ENCODE measurements at regions of chr17 and their contacts with region 1.

Region 1: DNA sequence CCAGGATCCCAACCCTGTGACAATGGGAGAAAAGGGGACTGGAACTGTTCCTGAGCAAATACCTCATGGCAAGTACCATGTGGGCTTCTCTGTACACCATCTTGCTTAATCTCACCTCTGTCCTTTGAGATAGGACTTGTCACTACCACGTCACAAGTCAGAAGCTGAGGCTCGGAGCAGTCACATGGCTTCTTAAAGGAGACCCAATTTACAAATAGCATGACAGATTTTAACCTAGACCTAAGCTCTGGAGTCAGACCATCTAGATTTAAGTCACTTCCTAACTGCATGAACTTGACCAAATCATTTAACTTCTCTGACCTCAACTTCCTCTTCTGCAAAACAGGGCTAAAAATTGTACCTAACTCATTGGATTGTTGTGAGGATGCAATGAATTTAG is 36.0 kb upstream of the CCL1 start:
- DNase-seq: no peak
- H3K4me3 ChIP-seq: no peak overlapping the region
- H3K27ac ChIP-seq: no peak overlapping the region
- H3K4me1 ChIP-seq: peaks cover 0 to 4% (median 0%) of the 10 kb centered on the region in 4 experiments; a peak in 2 of 7 replicates
- H3K27me3 ChIP-seq: no peaks in the 10 kb centered on the region; a peak in 2 of 7 replicates
- CTCF ChIP-seq: no peak
- EP300 ChIP-seq: no peak
- POLR2A ChIP-seq: no peak
- RAD21 ChIP-seq: no peak

Region 2: DNA sequence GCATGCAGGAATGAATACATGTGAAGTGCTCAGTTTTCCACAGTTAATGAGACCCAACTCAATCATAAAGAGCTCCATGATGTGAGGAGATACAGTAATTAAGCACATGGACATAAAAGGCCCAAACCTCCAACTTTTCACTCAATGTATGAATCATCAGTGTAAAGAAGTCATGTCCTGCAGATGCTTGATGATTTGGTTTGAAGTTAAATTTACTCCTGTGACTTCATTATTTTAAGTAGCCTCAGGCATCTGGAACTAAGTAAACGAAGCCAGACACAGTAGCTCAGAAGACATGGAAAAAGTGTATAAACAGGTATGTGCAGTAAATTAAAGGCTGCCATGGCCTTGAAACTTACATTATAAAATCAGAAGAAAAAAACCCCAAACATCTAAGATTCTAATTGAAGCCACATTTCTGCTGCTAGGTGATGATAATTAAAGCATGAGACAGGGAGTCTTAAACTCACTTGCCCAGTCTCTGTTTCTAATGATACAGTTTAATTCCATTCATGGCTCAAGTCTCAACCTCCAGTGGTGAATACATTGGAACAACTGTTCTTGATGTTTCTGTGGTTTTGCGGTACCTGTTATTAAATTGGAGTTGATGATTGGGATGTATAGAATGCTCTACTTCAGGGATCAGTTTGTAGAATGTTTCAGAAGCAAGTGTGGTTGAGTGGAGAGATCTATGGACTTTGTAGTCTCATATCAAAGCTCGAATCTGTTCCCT is 172.8 kb before region 1 on chr17:
- CTCF ChIA-PET with region 1: no interaction called
- POLR2A ChIA-PET with region 1: no interaction called
- DNase-seq: no peak
- H3K4me3 ChIP-seq: no peak overlapping the region
- H3K27ac ChIP-seq: no peak overlapping the region
- H3K4me1 ChIP-seq: 0 out of 7 replicates have a peak, but pooled peaks cover 0 to 4% (median 0%) of the 10 kb centered on the region in 4 experiments
- H3K27me3 ChIP-seq: no peaks in the 10 kb centered on the region
- CTCF ChIP-seq: no peak
- EP300 ChIP-seq: no peak
- POLR2A ChIP-seq: no peak
- RAD21 ChIP-seq: no peak

Region 3: DNA sequence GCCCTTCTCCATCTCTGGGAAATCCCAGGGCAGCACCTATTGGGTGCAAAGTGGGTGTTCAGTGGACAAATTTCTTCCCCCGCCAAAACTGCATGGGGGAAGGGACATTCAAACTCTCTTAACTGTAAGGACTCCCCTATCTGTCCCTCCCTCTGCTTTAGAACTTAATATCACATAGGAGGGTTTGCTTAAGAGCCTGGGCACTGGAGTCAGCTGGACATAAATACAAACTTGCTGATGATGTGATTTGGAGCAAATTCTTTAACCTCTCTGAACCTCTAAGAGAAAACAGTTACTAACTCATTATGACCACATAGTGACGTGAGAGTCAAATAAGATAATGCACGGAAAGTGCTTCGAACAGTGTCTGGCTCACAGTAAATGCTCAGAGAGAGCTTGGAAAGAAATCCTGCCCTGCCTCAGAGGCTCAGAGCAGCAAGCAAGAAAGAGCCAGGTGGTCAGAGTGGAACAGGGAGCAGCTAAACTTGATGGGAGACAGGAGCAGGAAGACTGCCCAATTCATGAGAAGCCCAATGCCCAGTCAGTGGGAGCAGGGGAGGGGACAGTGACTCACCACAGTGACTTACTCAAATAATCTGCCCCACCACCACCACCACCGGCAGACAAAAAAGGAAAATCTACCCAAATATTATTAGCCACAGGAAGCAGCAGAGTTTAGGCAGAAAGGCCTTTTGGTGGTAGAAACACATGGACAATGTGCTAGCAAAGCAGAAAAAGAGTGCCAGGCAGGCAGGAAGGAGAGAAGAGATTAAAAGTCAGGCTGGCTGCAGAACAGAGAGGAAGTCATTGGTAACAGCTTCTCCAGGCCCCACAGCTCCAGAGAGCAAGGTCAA is 12.1 kb before region 1 on chr17:
- CTCF ChIA-PET with region 1: interaction called, 14 read pairs
- POLR2A ChIA-PET with region 1: no interaction called
- DNase-seq: no peak
- H3K4me3 ChIP-seq: no peak overlapping the region
- H3K27ac ChIP-seq: no peak overlapping the region
- H3K4me1 ChIP-seq: no peaks in the 10 kb centered on the region
- H3K27me3 ChIP-seq: no peaks in the 10 kb centered on the region; a peak in 1 of 7 replicates
- CTCF ChIP-seq: no peak
- EP300 ChIP-seq: no peak
- POLR2A ChIP-seq: no peak
- RAD21 ChIP-seq: no peak